Prostate gland (tissue), 2 donors: ENCODE measurements at regions of chr3 and their contacts with region 1.

Region 1: DNA sequence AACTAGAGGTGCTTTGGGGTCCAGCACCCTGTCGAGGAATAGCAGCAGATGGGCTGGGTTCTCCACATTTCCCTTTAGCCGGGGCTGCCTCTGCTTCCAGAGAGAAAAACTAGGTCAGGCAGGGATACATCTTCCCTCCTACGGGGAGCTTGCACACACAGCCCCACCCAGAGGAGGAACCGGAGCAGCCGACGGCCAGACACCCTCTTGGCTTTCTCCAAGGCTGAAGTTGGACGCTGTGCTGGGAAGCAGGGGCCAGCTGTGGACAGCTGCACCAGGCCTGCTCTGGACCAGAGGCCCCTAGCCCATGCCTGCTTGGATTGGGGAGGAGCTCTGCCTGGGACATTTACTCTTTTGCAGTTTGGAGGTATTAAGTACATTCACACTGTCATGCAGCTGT is 44.7 kb upstream of the NR2C2 start:
- DNase-seq: no peak
- H3K4me3 ChIP-seq: no peak overlapping the region
- H3K27ac ChIP-seq: no peak overlapping the region
- H3K4me1 ChIP-seq: no peaks in the 10 kb centered on the region
- H3K27me3 ChIP-seq: no peaks in the 10 kb centered on the region
- CTCF ChIP-seq: no peak
- POLR2A ChIP-seq: no peak

Region 2: DNA sequence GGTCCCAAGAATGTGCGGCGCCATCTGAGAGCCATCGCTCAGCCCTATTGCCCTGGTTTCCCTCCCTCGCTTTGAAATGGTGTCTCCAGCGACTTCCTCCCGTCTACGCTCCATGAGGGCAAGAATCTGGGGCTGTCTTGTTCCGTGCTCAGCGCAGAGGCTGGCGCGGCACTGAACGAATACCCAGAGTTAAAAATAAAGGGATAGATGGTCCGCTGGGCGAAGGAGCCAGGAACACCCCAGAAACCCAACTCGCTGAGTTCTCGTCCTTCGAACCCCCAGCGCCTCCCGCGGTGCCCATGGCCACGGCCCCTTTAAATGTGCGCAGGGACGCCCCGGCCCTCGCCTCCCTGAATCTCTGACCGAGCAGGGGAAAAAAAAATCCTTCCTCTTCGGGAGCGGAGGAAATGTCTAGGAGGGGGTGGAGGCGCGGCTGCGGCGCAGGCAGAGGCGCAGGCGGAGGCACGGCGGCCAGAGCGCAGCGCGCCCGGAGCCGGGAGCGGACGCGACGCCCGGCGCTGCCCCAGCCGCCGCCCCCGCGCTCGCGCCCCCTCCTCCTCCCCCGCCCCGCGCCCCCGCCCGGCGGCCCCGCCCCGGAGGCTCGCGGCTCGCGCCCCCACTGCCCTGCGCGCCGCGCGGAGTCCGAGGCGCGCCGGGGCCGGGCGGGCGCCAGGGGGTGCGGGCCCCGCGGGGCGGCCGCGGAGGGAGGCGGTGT is 92.5 kb before region 1 on chr3:
- intact Hi-C with region 1: loop called (anchors 5 kb)
- DNase-seq: no peak
- H3K4me3 ChIP-seq: peak overlapping the region; percentile 28 to 35
- H3K27ac ChIP-seq: peak overlapping the region in 1 of 2 donors; percentile 51
- H3K4me1 ChIP-seq: no peaks in the 10 kb centered on the region
- H3K27me3 ChIP-seq: no peaks in the 10 kb centered on the region
- CTCF ChIP-seq: no peak
- POLR2A ChIP-seq: no peak